HEK293 (cell line): ENCODE measurements at regions of chr18 and their contacts with region 1.

Region 1: DNA sequence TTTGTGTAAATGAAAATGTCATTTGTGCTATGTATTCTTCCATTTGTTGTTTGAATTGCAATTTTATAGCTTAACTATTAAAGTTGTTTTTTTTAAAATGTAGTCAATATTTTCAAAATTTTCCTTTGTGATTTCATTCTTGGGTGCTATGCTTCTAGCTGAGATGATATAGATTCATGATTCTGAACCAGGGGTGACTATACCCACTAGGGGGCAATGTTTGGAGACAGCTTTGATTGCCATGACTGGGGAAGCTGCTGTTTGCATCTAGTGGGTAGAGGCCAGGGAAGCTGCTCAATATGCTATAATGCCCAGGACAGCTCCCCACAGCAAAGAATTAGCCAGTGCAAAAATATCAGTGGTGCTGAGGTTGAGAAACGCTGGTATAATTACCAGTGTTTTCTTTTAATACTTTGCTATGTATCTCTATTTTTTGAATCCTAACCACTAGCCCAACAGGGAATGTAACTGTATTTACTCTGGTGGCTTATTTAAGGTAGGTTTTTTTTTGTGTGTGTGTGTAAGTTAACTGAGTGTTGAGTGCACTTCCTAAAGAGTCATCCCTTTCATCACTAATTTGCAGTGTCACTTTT is 99.7 kb downstream of the MEP1B start:
- H3K4me3 ChIP-seq: no peak overlapping the region
- H3K27ac ChIP-seq: no peak overlapping the region
- H3K4me1 ChIP-seq: no peaks in the 10 kb centered on the region
- CTCF ChIP-seq: no peak

Region 2: DNA sequence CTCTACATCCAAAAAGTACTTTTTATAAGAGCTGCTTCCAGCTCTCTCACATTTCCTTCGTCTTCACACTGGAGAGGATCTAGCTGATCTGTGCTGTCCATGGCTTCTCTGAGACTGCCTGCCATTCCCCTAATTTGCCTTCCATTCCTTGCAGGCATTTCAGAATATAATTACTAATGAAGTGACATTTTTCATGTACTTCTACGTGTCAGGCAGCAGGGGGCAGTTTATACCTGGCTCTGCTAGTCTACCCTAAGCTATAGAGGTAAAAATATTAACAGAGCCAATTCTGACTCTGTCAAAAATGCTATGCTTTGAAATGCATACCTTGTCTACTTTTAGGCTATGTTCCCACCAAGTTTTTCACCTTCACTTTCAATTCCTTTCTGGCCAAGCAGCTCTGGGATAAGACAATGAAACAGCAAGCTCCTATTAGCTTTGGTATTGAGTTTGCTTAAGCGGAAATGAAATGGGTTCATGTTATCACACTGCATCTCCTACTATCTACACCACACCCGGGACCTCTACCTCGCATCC is 17.8 kb before region 1 on chr18:
- CTCF ChIA-PET with region 1: interaction called, 35 read pairs
- POLR2A ChIA-PET with region 1: no interaction called
- H3K4me3 ChIP-seq: no peak overlapping the region
- H3K27ac ChIP-seq: no peak overlapping the region
- H3K4me1 ChIP-seq: no peaks in the 10 kb centered on the region
- CTCF ChIP-seq: peak; percentile 34

Region 3: DNA sequence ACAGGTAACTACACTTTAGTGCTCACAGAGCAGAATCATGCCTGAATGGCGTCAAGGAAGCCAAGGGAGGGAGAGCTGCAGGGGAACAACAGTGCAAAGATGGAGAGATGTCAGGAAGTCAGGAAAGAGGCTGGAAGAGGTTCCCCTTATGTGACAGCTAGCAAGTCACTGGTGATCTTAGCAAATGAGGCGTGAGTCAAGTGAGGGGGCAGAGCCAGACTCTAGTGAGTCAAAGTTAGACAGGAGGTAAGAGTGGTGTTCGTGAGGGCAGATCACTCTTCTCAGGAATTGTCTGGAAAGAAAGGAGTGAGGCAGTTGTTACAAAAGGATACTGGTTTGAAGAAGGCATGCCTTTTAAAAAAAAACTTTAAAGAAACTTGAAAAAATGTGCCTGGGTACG is 12.7 kb before region 1 on chr18:
- CTCF ChIA-PET with region 1: interaction called, 35 read pairs
- POLR2A ChIA-PET with region 1: no interaction called
- H3K4me3 ChIP-seq: no peak overlapping the region
- H3K27ac ChIP-seq: no peak overlapping the region
- H3K4me1 ChIP-seq: no peaks in the 10 kb centered on the region
- CTCF ChIP-seq: no peak

Region 4: DNA sequence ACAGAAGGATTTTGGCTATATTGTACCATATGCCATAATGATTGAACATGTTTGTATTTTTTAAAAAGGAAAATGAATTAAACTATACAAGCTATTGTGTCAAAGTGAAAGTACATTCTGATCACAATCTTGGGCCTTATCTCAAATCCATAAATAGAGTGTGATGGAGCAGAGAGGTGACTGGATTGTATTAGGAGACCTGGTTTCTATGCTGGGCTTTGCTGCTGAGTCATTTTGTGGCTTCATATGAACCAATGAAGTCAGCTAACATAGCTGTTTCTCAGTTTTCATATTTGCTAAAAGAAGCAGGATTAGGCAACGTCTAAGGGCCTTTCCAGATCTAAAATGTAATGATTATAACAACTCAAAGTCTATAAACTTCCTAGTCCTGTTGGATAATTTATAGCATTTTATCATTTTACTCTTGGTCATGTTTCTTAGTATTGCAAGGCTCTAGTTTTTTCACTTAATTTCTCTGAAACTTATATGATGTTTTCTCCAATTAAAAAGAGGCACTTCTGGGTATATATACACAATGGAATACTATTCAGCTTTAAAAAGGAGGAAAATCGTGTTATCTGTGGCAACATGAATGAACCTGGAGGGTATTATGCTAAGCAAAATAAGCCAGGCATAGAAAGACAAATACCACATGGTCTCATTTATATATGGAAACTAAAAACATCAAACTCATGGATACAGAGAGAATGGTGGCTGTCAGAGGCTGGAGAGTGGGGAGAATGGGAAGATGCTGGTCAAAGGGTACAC is 12.6 kb after region 1 on chr18:
- CTCF ChIA-PET with region 1: interaction called, 18 read pairs
- POLR2A ChIA-PET with region 1: no interaction called
- H3K4me3 ChIP-seq: no peak overlapping the region
- H3K27ac ChIP-seq: no peak overlapping the region
- H3K4me1 ChIP-seq: no peaks in the 10 kb centered on the region
- CTCF ChIP-seq: no peak

Region 5: DNA sequence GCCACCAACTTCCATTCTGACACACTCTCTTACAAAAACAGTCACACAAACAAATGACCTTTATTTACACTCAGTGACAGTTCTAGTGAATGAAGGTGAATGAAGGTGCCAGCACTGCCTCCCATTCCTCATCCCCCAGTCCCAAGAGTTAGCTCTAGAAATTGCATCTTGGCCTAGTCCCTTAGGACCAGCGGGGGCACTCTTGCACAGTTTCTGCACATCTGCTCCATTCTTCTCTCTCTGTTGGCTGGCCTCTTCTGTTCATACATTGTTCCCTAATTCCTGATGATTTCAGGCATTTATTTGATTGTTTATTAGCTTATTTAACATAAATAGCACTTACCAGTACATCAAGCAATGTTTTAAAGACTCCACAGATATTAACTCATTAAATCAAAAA is 150.2 kb after region 1 on chr18:
- CTCF ChIA-PET with region 1: interaction called, 16 read pairs
- POLR2A ChIA-PET with region 1: no interaction called
- H3K4me3 ChIP-seq: no peak overlapping the region
- H3K27ac ChIP-seq: no peak overlapping the region
- H3K4me1 ChIP-seq: no peaks in the 10 kb centered on the region
- CTCF ChIP-seq: no peak

Region 6: GRCh38 chr18:32714571-32715148 is 425.1 kb after region 1 on chr18:
- CTCF ChIA-PET with region 1: no interaction called
- POLR2A ChIA-PET with region 1: no interaction called
- H3K4me3 ChIP-seq: no peak overlapping the region
- H3K27ac ChIP-seq: no peak overlapping the region
- H3K4me1 ChIP-seq: no peaks in the 10 kb centered on the region
- CTCF ChIP-seq: peak; percentile 74